Activated CD4-positive, alpha-beta memory T cell treated with anti-CD3 and anti-CD28 coated beads, Interleukin-2, amount 10 ng/mL, durations not matched to agents 7 days and 5 days (primary cell): ENCODE measurements at regions of chr10 and their contacts with region 1.

Region 1: GRCh38 chr10:11145495-11145855 is 127.8 kb downstream of the CELF2 start:
- DNase-seq: peak; percentile 82
- H3K4me3 Mint-ChIP-seq: peak overlapping the region; percentile 60
- H3K27ac Mint-ChIP-seq: peak overlapping the region; percentile 93
- H3K4me1 Mint-ChIP-seq: peaks cover 94% of the 10 kb centered on the region
- H3K27me3 Mint-ChIP-seq: no peaks in the 10 kb centered on the region

Region 2: DNA sequence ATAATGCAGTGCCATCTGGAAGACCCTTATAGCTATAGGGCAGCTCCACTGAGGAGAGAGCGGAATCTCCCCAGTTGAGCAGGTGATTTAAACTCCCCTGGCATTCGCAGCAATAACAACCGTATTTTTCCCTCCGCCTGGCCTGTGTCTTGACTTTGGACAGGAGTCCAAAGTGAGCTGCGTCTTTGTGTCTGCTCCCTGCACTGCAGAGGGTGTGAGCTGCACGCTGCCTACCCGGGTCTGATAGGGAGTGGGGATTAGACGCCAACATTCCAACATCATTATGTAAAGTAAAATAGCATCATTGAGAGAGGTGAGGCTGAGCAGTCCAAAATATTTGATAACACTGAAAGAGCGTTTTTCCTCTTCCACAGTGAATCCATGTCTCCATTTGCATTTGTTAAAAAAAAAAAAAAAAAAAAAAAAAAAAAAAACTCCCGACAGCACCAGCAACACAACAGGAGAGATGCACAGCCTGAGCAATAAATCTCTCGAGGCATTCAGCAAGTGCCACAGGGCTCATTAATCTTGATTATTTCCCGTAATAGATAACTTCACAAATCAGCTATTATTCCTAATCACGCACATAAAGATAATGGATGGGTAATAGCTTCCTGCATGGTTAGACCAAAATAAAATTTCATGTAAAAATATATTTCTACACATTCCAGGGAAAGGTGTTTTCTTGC is 59.2 kb before region 1 on chr10:
- CTCF ChIA-PET with region 1: no interaction called
- POLR2A ChIA-PET with region 1: no interaction called
- DNase-seq: no peak
- H3K4me3 Mint-ChIP-seq: no peak overlapping the region
- H3K27ac Mint-ChIP-seq: no peak overlapping the region
- H3K4me1 Mint-ChIP-seq: peaks cover under 1% of the 10 kb centered on the region
- H3K27me3 Mint-ChIP-seq: peaks cover 12% of the 10 kb centered on the region

Region 3: GRCh38 chr10:11106621-11107374 is 38.7 kb before region 1 on chr10:
- CTCF ChIA-PET with region 1: interaction called, 4 read pairs
- POLR2A ChIA-PET with region 1: interaction called, 15 read pairs
- DNase-seq: no peak
- H3K4me3 Mint-ChIP-seq: no peak overlapping the region
- H3K27ac Mint-ChIP-seq: no peak overlapping the region
- H3K4me1 Mint-ChIP-seq: peaks cover 20% of the 10 kb centered on the region
- H3K27me3 Mint-ChIP-seq: peaks cover 13% of the 10 kb centered on the region

Region 4: GRCh38 chr10:11113156-11113555 is 32.3 kb before region 1 on chr10:
- CTCF ChIA-PET with region 1: interaction called, 4 read pairs
- POLR2A ChIA-PET with region 1: interaction called, 15 read pairs
- DNase-seq: no peak
- H3K4me3 Mint-ChIP-seq: no peak overlapping the region
- H3K27ac Mint-ChIP-seq: no peak overlapping the region
- H3K4me1 Mint-ChIP-seq: peaks cover 15% of the 10 kb centered on the region
- H3K27me3 Mint-ChIP-seq: peaks cover 4% of the 10 kb centered on the region

Region 5: GRCh38 chr10:11170993-11171851 is 25.7 kb after region 1 on chr10:
- CTCF ChIA-PET with region 1: interaction called, 85 read pairs
- POLR2A ChIA-PET with region 1: interaction called, 1,515 read pairs
- DNase-seq: peak; percentile 58
- H3K4me3 Mint-ChIP-seq: no peak overlapping the region
- H3K27ac Mint-ChIP-seq: no peak overlapping the region
- H3K4me1 Mint-ChIP-seq: peaks cover 39% of the 10 kb centered on the region
- H3K27me3 Mint-ChIP-seq: no peaks in the 10 kb centered on the region